HCT116 (cell line): ENCODE measurements at regions of chr9 and their contacts with region 1.

Region 1: GRCh38 chr9:92276331-92277032 is 17.0 kb downstream of the IARS1 start:
- DNase-seq: no peak
- ATAC-seq: no peak
- H3K4me3 ChIP-seq: no peak overlapping the region
- H3K27ac ChIP-seq: no peak overlapping the region
- H3K4me1 ChIP-seq: no peaks in the 10 kb centered on the region
- H3K27me3 ChIP-seq: no peaks in the 10 kb centered on the region
- CTCF ChIP-seq: no peak
- POLR2A ChIP-seq: no peak
- RAD21 ChIP-seq: no peak

Region 2: GRCh38 chr9:92242260-92243136 is 34.0 kb before region 1 on chr9:
- CTCF ChIA-PET with region 1: no interaction called
- POLR2A ChIA-PET with region 1: no interaction called
- RAD21 ChIA-PET with region 1: no interaction called
- intact Hi-C with region 1: loop called (anchors 5 kb)
- DNase-seq: no peak
- ATAC-seq: peak; percentile 57; the same call in 1 of the 2 replicates
- H3K4me3 ChIP-seq: no peak overlapping the region
- H3K27ac ChIP-seq: no peak overlapping the region
- H3K4me1 ChIP-seq: no peaks in the 10 kb centered on the region
- H3K27me3 ChIP-seq: no peaks in the 10 kb centered on the region
- CTCF ChIP-seq: peak in 1 of 3 experiments; percentile 14; a peak in 1 of 6 replicates
- POLR2A ChIP-seq: no peak
- RAD21 ChIP-seq: no peak; the same call in 1 of the 2 replicates

Region 3: GRCh38 chr9:92378865-92379560 is 102.5 kb after region 1 on chr9:
- CTCF ChIA-PET with region 1: no interaction called
- POLR2A ChIA-PET with region 1: no interaction called
- RAD21 ChIA-PET with region 1: no interaction called
- intact Hi-C with region 1: no loop called
- DNase-seq: no peak
- ATAC-seq: no peak
- H3K4me3 ChIP-seq: no peak overlapping the region
- H3K27ac ChIP-seq: no peak overlapping the region
- H3K4me1 ChIP-seq: no peaks in the 10 kb centered on the region
- H3K27me3 ChIP-seq: no peaks in the 10 kb centered on the region
- CTCF ChIP-seq: no peak
- POLR2A ChIP-seq: no peak
- RAD21 ChIP-seq: no peak